Activated naive CD4-positive, alpha-beta T cell treated with anti-CD3 and anti-CD28 coated beads for 36 hours (primary cell): ENCODE measurements at regions of chr19 and their contacts with region 1.

Region 1: GRCh38 chr19:47157431-47158321 is 27.0 kb downstream of the SAE1 start:
- DNase-seq: peak; percentile 69
- H3K4me3 Mint-ChIP-seq: peak overlapping the region; percentile 57
- H3K27ac Mint-ChIP-seq: peak overlapping the region; percentile 98
- H3K4me1 Mint-ChIP-seq: peaks cover 76% of the 10 kb centered on the region
- H3K27me3 Mint-ChIP-seq: no peaks in the 10 kb centered on the region

Region 2: DNA sequence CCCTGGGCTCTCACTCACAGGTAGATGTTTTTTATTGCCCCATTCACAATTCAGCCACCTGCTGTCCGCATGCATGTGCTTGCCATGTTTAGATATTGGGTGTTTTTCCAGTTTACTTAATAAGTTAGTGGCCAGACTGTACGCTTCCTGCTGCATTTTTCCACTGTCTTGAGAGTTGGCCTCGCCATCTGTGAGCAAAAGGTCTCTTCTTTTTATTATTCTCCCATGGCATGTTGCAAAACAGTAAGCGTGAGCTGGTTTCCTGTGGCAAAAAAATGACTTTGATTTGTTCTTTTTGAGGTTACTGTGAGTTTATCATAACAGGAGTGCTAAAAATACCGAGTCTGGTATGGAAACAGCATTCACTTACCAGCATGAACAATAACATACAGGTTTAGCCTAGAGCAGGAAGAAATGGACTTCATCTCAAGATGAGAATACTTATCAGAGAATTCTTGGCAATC is 19.0 kb after region 1 on chr19:
- CTCF ChIA-PET with region 1: interaction called, 7 read pairs
- intact Hi-C with region 1: loop called (anchors 1 kb)
- DNase-seq: peak; percentile 77
- H3K4me3 Mint-ChIP-seq: peak overlapping the region; percentile 51
- H3K27ac Mint-ChIP-seq: peak overlapping the region; percentile 98
- H3K4me1 Mint-ChIP-seq: peaks cover 74% of the 10 kb centered on the region
- H3K27me3 Mint-ChIP-seq: no peaks in the 10 kb centered on the region

Region 3: GRCh38 chr19:47370045-47370611 is 212.5 kb after region 1 on chr19:
- CTCF ChIA-PET with region 1: no interaction called
- intact Hi-C with region 1: no loop called
- DNase-seq: no peak
- H3K4me3 Mint-ChIP-seq: peak overlapping the region; percentile 16
- H3K27ac Mint-ChIP-seq: no peak overlapping the region
- H3K4me1 Mint-ChIP-seq: no peaks in the 10 kb centered on the region
- H3K27me3 Mint-ChIP-seq: no peaks in the 10 kb centered on the region